ENCODE measurements at regions of chr19 and their contacts with region 1.

Region 1: GRCh38 chr19:55244004-55244680 is 14.7 kb downstream of the PPP6R1 start:
- DNase-seq: no peak
- ATAC-seq: no peak

Region 2: DNA sequence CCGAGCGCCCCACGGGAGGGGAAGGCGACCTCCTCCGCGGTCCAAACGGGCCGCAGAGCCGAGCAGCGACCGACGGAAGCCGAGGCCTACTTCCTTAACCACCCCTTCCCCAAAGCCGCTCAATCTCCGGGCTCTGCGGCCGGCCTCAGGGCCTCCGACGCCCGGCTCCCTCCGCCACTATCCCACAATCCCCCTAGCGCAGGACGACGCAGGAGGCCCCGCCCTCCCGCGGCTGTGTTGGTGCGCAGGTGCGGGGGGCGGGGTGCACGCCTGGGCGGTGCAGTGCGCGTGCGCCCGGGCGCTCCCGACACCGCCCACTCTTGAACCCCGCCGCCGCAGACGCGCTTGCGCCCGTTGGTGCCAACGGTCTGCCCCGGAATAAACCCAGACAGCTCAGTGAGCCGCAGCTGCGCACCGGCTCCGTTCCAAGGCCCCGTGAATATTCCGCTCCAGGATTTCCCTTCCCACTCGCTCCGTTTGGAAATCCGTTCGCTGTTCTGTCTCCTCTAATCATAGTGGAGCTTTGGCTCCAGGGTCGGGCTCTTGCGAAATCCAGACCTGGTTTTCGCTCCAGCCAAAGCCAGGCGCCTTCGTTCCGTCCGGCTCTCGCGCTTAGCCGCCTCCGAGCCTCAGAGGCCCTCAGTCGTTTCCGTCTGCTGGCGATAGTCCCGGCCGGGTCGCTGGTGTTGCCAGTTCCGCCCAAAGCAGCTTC is 14.8 kb after region 1 on chr19 and contains the start of gene PPP6R1:
- intact Hi-C with region 1: loop called (anchors 1 kb)
- DNase-seq: peak; percentile 98
- ATAC-seq: peak; percentile 97
- total RNA-seq, gene PPP6R1: 40.4 TPM